ENCODE measurements at regions of chr17 and their contacts with region 1.

Region 1: DNA sequence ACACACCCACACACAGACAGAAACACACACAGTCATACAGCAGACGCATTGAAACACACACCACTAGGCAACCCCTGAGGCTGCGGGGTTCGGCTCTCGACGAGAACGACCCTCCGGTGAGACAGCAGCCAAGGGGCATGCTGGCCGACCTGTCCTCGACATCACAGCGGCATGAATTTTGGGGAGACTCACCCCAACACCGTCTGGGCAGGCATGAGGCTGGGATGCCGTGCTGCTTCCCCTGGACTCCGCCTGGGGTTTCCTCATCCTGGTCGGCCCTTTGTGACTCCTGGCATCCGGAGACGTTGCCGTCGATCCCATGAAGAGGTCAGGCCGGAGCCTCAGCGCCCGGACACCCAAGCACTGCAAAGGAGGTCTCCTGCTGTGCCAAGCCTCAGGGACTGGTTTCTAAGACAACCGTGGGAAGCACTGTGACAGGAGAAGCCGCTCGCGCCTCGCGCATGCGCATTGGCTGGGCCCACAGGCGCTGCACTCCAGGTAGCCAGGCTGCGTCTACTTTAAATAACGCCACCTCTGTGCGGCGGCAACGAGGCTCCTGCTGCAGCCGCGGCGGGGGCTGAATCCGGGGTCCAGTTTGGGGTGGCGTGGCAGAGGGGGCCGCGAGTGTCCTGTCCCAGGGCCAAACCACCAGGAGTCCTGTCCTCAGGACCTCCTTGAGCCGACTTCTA is 13.8 kb upstream of the KCNJ18 start:
- DNase-seq: peak; percentile 72 to 79 (median 75)
- ATAC-seq: peak; percentile 79
- H3K4me3 ChIP-seq: peak overlapping the region; percentile 31
- H3K27ac ChIP-seq: no peak overlapping the region
- H3K4me1 ChIP-seq: peaks cover 3 to 37% of the 10 kb centered on the region in 2 experiments; a peak in 4 of 5 replicates
- H3K27me3 ChIP-seq: peaks cover 0 to 33% of the 10 kb centered on the region in 2 experiments; a peak in 2 of 5 replicates
- CTCF ChIP-seq: no peak
- EP300 ChIP-seq: no peak
- POLR2A ChIP-seq: no peak
- RAD21 ChIP-seq: no peak

Region 2: DNA sequence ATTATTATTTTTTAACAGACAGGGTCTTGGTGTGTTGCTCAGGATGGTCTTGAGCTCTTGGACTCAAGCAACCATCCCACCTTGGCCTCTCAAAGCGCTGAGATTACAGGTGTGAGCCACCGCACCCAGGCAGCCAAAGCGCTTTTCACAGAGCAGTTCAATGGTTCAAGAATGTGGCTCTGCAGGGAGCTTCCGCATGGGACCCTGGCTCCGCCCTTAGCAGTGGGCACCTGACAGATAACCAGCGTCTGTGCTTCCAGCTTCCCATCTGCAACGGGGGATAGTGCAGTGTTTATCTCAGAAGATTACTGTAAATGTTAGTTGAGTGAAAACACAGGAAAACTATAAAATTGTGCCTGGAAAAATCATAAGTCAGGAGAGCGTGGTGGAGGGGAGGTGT is 203.0 kb before region 1 on chr17:
- CTCF ChIA-PET with region 1: no interaction called
- POLR2A ChIA-PET with region 1: no interaction called
- in situ Hi-C with region 1: no loop called
- intact Hi-C with region 1: no loop called
- DNase-seq: peak in 1 of 4 experiments; percentile 13
- ATAC-seq: no peak
- H3K4me3 ChIP-seq: no peak overlapping the region
- H3K27ac ChIP-seq: no peak overlapping the region
- H3K4me1 ChIP-seq: no peaks in the 10 kb centered on the region; a peak in 2 of 5 replicates
- H3K27me3 ChIP-seq: peaks cover 0 to 15% of the 10 kb centered on the region in 2 experiments; a peak in 1 of 5 replicates
- CTCF ChIP-seq: no peak
- EP300 ChIP-seq: peak; percentile 8; the same call in 1 of the 2 replicates
- POLR2A ChIP-seq: no peak
- RAD21 ChIP-seq: no peak

Region 3: GRCh38 chr17:21539146-21539545 is 139.4 kb before region 1 on chr17:
- CTCF ChIA-PET with region 1: no interaction called
- POLR2A ChIA-PET with region 1: no interaction called
- in situ Hi-C with region 1: no loop called
- intact Hi-C with region 1: no loop called
- DNase-seq: no peak
- ATAC-seq: no peak
- H3K4me3 ChIP-seq: no peak overlapping the region
- H3K27ac ChIP-seq: no peak overlapping the region
- H3K4me1 ChIP-seq: no peaks in the 10 kb centered on the region
- H3K27me3 ChIP-seq: no peaks in the 10 kb centered on the region
- CTCF ChIP-seq: no peak
- EP300 ChIP-seq: no peak
- POLR2A ChIP-seq: no peak
- RAD21 ChIP-seq: no peak

Region 4: DNA sequence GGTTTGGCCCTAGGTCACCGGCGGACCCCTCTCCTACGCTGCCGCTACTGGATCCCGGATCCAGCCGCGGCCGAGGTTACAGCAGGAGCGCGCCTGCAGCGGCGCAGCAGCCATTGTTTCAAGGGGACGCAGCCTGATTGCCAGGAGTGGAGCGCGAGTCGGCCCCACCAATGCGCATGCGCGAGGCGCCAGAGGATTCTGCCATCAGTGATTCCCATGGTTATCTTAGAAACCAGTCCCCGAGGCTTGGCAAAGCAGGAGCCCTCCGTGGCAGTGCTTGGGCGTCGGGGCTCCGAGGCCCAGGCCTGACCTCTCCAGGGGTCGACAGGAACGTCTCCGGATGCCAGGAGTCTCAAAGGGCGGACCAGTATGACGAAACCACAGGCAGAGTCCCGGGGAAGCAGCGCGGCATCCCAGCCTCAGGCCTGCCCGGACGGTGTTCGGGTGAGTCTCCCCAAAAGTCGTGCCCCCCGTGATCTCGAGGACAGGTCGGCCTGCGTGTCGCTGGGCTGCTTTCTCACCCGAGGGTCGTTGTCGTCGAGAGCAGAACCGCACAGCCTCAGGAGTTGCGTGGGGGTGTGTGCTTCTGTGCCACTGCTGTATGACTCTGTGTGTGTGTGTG is 622.3 kb after region 1 on chr17:
- CTCF ChIA-PET with region 1: no interaction called
- POLR2A ChIA-PET with region 1: no interaction called
- in situ Hi-C with region 1: loop called (anchors 10 kb)
- intact Hi-C with region 1: no loop called
- DNase-seq: no peak
- ATAC-seq: no peak
- H3K4me3 ChIP-seq: no peak overlapping the region
- H3K27ac ChIP-seq: no peak overlapping the region
- H3K4me1 ChIP-seq: peaks cover 2 to 12% of the 10 kb centered on the region in 2 experiments; a peak in 2 of 5 replicates
- H3K27me3 ChIP-seq: no peaks in the 10 kb centered on the region
- CTCF ChIP-seq: no peak
- EP300 ChIP-seq: no peak
- POLR2A ChIP-seq: no peak
- RAD21 ChIP-seq: no peak

Measured in K562 (cell line).